ENCODE measurements at regions of chr17 and their contacts with region 1.

Region 1: GRCh38 chr17:50841949-50842354 is 6.6 kb downstream of the WFIKKN2 start:
- DNase-seq: peak; percentile 46 to 94 (median 86)

Region 2: GRCh38 chr17:50783193-50783660 is 58.7 kb before region 1 on chr17:
- intact Hi-C with region 1: loop called (anchors 2 kb)
- DNase-seq: peak; percentile 63 to 97 (median 91)

Region 3: DNA sequence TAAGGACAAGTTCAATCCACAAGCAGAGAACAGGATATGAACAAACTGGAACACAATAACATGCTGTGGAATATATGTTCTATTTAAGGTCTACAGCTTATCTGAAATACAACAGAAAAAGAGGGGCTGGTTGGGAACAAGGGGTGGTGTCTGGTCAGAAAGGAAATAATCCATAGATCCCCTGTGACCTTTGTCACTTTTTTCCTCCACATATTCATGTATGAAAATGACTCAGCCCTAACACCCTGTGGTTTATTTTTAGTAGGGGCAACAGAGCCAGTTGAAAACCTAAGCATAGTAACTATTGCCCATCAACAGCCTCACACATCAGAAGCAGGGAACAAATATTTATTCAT is 291.0 kb after region 1 on chr17:
- intact Hi-C with region 1: no loop called
- DNase-seq: no peak